ENCODE measurements at regions of chr19 and their contacts with region 1.

Region 1: GRCh38 chr19:8252922-8253589 is 43.9 kb downstream of the CERS4 start:
- DNase-seq: peak; percentile 80
- H3K4me3 ChIP-seq: no peak overlapping the region
- H3K27ac ChIP-seq: no peak overlapping the region
- H3K4me1 ChIP-seq: peaks cover 13% of the 10 kb centered on the region
- H3K27me3 ChIP-seq: no peaks in the 10 kb centered on the region
- CTCF ChIP-seq: peak; percentile 83 to 89 (median 85)
- POLR2A ChIP-seq: no peak

Region 2: GRCh38 chr19:7943444-7944176 is 309.4 kb before region 1 on chr19 and contains the start of gene TIMM44:
- intact Hi-C with region 1: loop called (anchors 10 kb)
- DNase-seq: peak; percentile 99
- H3K4me3 ChIP-seq: peak within 1 kb of the TSS; percentile 77 to 82
- H3K27ac ChIP-seq: peak within 1 kb of the TSS; percentile 87 to 94
- H3K4me1 ChIP-seq: peaks cover 7% of the 10 kb centered on the region
- H3K27me3 ChIP-seq: no peaks in the 10 kb centered on the region
- CTCF ChIP-seq: peak in 1 of 3 experiments; percentile 25
- POLR2A ChIP-seq: no peak
- total RNA-seq, gene TIMM44: 68.0 to 71.2 TPM

Region 3: GRCh38 chr19:8158411-8159074 is 94.5 kb before region 1 on chr19:
- intact Hi-C with region 1: loop called (anchors 5 kb)
- DNase-seq: peak; percentile 75
- H3K4me3 ChIP-seq: no peak overlapping the region
- H3K27ac ChIP-seq: no peak overlapping the region
- H3K4me1 ChIP-seq: peaks cover 15% of the 10 kb centered on the region
- H3K27me3 ChIP-seq: no peaks in the 10 kb centered on the region
- CTCF ChIP-seq: peak; percentile 43 to 74 (median 55)
- POLR2A ChIP-seq: no peak